ENCODE measurements at regions of chr4 and their contacts with region 1.

Region 1: GRCh38 chr4:179182741-179183140 is 1740.5 kb upstream of the AGA start:
- DNase-seq: no peak
- H3K4me3 ChIP-seq: no peak overlapping the region
- H3K27ac ChIP-seq: no peak overlapping the region
- H3K4me1 ChIP-seq: no peaks in the 10 kb centered on the region
- H3K27me3 ChIP-seq: no peaks in the 10 kb centered on the region
- CTCF ChIP-seq: no peak
- EP300 ChIP-seq: no peak
- POLR2A ChIP-seq: no peak

Region 2: DNA sequence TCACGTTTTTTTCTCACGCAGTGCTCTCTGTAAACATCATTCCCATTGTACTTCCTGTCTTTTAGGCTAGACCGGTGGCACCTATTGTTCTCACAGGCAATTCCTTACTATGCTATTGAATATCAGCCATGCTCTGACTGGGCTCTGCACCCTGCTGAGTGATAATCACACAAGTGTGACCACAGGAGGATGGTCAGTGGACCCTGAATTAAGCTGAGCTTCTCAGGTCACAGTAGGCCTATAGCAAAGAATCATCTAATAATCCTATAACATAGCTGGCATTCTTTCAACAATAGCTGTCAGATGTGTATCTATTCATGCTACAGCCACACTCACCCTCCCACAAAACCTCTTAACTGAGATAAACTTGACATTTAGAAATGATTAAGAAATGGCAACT is 660.6 kb after region 1 on chr4:
- in situ Hi-C with region 1: no loop called
- intact Hi-C with region 1: no loop called
- DNase-seq: no peak
- H3K4me3 ChIP-seq: no peak overlapping the region
- H3K27ac ChIP-seq: no peak overlapping the region
- H3K4me1 ChIP-seq: no peaks in the 10 kb centered on the region
- H3K27me3 ChIP-seq: no peaks in the 10 kb centered on the region
- CTCF ChIP-seq: no peak
- EP300 ChIP-seq: no peak
- POLR2A ChIP-seq: no peak

Region 3: GRCh38 chr4:180664766-180665368 is 1482.1 kb after region 1 on chr4:
- in situ Hi-C with region 1: no loop called
- intact Hi-C with region 1: loop called (anchors 5 kb)
- DNase-seq: peak; percentile 56
- H3K4me3 ChIP-seq: no peak overlapping the region
- H3K27ac ChIP-seq: no peak overlapping the region
- H3K4me1 ChIP-seq: peaks cover 0 to 5% (median 0%) of the 10 kb centered on the region in 4 donors
- H3K27me3 ChIP-seq: no peaks in the 10 kb centered on the region
- CTCF ChIP-seq: peak; percentile 41 to 72 (median 70)
- EP300 ChIP-seq: no peak
- POLR2A ChIP-seq: no peak